Tibial artery (tissue), 4 donors: ENCODE measurements at regions of chr6 and their contacts with region 1.

Region 1: DNA sequence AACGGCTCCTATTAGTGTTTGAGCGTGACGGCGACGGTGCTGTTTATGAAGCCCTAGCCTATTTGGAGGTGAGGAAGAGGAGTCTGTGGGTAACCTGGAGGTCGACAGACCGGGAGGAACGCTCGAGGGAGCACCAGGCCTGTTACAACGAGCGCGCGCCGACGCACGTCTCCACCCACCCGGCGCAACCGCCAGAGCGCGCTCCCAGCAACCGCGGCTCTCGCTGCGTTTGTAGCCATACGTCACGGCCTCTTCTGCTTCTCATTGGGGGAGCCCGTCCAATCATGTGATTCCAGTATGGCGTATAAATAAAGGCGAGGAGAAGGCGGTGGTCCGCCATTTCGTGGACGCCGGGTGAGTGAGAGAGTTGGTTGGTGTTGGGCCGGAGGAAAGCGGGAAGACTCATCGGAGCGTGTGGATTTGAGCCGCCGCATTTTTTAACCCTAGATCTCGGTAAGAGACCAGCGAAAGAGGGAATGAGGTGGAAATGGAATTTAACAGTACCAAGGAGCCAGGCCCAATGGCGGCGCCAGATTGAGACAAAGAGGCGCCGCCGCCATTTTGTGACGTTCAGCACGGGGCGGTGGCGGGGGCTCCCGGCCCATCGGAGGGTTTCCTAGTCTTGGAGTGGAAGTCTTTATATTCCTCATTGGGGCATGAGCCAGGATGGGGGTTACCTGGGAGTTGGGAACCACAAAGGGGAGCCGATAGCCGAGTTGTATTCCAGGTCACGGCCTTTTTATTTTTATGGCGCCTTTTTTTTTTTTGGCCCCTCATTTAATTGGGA is at the start of gene SRSF3:
- DNase-seq: peak; percentile 96 to 98
- H3K4me3 ChIP-seq: peak within 1 kb of the TSS; percentile 61 to 62
- H3K27ac ChIP-seq: peak within 1 kb of the TSS; percentile 94 to 96
- H3K4me1 ChIP-seq: peaks cover 0 to 40% (median 32%) of the 10 kb centered on the region in 4 donors
- H3K27me3 ChIP-seq: no peaks in the 10 kb centered on the region
- CTCF ChIP-seq: peak; percentile 51 to 54

Region 2: DNA sequence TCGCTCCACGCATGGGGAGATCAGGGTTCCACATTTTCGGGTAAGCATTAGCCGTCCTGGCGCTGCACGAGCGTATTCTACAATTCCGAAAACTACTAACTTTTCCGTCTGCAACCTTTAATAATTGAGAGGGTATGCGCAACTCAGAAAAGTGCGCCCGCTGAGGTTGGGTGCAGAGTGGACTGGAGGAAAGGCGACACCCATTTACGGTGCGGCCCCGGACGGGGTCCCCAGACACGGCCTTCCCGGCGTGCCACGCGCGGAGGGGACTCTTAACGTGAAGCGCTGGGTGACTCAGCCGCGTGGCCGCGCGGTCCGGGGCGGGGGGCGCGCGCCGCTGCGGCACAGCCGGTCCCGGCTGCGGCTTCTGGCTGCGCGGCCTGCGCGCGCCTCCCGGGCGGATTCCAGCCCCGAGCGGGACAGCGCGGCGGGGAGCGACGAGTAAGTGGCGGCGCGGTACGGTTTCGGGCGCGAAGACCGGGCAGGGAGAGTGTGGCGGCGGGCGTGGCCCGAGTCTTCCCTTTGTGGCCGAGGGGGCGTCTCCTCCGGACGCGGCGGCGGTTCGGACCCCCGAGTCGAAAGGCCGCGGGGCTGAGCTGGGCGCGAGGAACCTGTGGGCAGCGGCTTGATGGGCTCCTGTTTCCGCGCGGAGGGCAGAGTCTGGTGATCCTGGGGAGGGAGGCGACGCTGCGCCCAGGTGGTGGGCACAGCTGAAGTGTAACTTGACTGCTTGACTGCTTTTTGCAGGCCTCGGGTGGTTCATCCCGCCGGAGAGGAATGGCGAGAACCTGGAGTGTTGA is 151.4 kb before region 1 on chr6 and contains the starts of genes KCTD20 and PXT1:
- intact Hi-C with region 1: loop called (anchors 5 kb)
- DNase-seq: peak; percentile 82 to 91
- H3K4me3 ChIP-seq: peak within 1 kb of the TSS; percentile 88 to 95
- H3K27ac ChIP-seq: peak within 1 kb of the TSS; percentile 96 to 97
- H3K4me1 ChIP-seq: peaks cover 0 to 53% (median 24%) of the 10 kb centered on the region in 4 donors
- H3K27me3 ChIP-seq: no peaks in the 10 kb centered on the region
- CTCF ChIP-seq: peak in 1 of 2 experiments; percentile 20

Region 3: GRCh38 chr6:36463676-36464075 is 130.5 kb before region 1 on chr6:
- intact Hi-C with region 1: no loop called
- DNase-seq: no peak
- H3K4me3 ChIP-seq: no peak overlapping the region
- H3K27ac ChIP-seq: no peak overlapping the region
- H3K4me1 ChIP-seq: peaks cover 0 to 7% (median 0%) of the 10 kb centered on the region in 4 donors
- H3K27me3 ChIP-seq: no peaks in the 10 kb centered on the region
- CTCF ChIP-seq: no peak

Region 4: DNA sequence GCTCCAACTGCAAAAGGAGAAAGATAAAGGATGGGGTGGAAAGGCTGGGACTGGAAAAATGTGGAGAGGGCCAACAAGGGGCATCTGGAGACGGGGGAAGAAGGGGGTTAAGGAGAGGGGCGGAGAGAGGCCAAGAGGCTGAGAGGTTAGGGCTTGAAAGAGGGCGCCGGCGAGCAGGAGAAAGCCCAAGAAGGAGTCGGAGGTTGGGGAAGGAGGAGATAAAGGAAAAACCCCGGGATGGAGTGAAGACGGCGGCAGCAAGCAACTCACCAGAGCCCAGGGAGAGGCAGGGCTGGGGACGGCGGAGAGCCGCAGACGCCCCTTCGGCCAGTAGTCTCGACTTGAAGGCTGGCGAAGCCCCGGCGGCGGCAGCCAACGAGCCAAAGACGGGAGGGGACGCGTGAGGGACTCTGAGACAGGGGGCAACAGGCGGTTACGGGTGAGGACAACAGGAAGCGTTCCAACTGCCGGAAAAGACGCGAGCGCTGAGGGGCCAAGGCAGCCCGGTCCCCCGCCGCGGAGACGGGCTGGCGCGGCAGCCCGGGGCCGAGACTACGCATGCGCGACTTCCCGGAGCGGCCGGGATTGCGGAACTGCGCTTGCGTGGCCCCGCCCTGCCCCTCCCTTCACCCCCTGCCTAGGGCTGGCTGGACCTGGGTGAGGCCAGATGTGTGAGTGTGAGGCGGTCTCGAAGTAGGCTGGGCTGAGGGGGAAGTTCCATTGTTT is 47.1 kb before region 1 on chr6 and contains the start of gene STK38:
- intact Hi-C with region 1: loop called (anchors 5 kb)
- DNase-seq: peak; percentile 86 to 95
- H3K4me3 ChIP-seq: peak within 1 kb of the TSS; percentile 67 to 87
- H3K27ac ChIP-seq: peak within 1 kb of the TSS; percentile 93 to 97
- H3K4me1 ChIP-seq: peaks cover 0 to 34% (median 18%) of the 10 kb centered on the region in 4 donors
- H3K27me3 ChIP-seq: no peaks in the 10 kb centered on the region
- CTCF ChIP-seq: peak in 1 of 2 experiments; percentile 15

Region 5: DNA sequence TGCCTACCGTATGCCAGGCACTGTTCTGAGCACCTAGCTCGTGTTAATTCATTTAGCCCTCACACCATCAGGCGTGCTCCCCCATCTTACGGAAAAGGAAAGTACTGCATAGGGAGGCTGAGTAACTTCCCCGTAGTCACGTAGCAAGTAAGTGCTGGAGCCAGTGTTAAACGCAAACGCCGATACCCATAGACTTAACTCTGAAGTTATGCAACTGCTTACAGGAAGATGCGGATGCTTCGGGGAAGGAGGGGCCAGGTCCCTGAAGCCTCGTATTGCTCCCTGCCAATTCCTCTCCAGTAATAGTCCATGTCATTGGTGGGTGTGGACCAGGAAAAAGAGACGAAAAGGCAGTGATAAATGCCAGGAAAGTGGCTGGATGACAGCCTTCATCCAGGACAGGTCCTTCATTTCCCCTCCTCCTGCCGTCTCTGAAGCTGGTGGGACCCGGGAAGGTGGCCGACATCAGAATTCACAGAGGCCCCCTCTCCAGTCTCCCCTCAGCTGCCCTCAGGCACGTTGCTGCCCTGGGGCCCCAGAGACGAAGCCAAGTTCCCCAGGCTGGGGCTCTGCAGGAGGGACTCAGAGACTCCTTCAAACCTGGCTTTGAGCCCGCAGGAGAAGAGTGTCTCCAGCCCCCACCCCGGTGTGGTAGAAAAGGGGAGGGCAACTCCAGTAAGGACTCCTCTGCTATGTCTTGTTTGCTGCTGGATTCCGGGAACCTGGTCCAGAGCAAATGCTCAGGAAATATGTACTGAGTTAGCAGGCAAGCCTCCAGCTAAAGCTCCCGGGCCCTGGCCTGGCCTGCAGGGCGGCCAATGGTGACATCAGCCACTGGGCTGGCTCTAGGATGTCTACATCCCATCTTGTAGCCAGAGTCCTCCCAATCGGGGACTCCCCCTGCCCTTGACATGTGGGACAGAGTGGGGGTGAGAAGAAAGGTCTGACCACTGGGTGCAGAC is 141.2 kb after region 1 on chr6:
- intact Hi-C with region 1: no loop called
- DNase-seq: peak; percentile 91 to 94
- H3K4me3 ChIP-seq: peak overlapping the region; percentile 41 to 50
- H3K27ac ChIP-seq: peak overlapping the region; percentile 81 to 89
- H3K4me1 ChIP-seq: peaks cover 0 to 20% (median 16%) of the 10 kb centered on the region in 4 donors
- H3K27me3 ChIP-seq: no peaks in the 10 kb centered on the region
- CTCF ChIP-seq: peak; percentile 5 to 31